ENCODE measurements at regions of chr3 and their contacts with region 1.

Region 1: DNA sequence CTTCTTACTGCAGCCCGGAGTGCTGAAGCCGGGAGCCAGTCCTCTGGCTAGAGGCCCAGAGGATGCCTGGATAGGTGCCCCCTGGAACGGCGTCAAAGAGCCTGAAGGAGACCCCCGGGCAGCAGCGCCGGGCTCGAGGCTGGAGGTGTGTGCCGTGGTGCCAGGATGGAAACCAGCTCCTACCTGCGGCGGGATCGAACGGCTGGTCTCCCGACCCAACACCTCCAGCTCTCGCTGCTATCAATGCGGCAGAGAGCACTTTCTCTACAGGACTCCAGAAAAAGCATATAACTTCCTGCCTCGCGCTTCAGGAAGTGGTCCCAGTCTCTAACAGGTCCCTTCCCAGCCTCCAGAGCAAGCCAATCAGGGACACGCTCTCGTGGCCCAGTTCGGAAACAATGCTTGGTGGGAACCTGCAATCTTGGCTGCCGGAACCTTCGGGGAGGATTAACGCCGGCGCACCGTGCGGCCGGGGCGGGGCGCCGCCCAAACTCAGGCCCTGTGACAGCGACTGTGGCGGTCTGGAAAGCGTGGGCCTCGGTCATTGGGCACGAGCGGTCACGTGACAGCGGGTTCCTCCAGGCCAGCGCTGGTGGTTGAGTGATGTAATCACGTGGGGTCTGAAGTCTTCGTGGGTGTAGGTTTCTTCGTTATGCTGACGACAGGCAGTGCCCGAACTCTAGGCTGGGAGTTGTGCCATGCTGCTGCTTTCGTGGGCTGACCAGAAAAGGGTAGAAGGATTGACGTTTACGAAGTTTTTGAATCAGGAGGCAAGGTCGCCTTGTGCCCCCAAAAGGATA is at the start of gene SLC33A1:
- DNase-seq: peak; percentile 100
- H3K4me3 ChIP-seq: peak within 1 kb of the TSS; percentile 76 to 96 (median 91)
- H3K27ac ChIP-seq: peak within 1 kb of the TSS; percentile 91 to 97 (median 94)
- H3K4me1 ChIP-seq: peaks cover 0 to 52% (median 44%) of the 10 kb centered on the region in 4 donors
- H3K27me3 ChIP-seq: no peaks in the 10 kb centered on the region
- CTCF ChIP-seq: no peak
- EP300 ChIP-seq: peak in 2 of 4 donors; percentile 76 to 90
- POLR2A ChIP-seq: peak; percentile 54 to 55
- total RNA-seq, gene SLC33A1: 14.4 to 28.2 (median 22.6) TPM

Region 2: DNA sequence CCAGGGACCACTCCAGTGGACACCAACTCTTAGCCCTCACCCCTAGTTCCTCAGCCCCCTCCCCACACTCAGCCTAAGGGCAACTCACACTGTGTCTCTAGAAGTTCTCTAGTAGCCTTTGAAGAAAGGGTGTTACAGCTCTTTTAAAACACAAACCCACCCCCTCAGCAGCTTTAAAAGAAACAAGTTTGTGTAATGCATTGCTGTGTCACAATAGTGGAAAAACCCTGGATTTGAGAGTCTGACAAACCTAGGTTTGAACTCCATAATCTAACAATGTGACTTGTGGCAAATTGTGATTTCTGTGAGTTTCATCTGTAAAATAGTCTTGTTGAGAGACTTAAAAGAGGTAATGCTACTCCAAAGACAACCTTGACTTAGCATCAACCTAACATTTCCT is 163.4 kb before region 1 on chr3:
- intact Hi-C with region 1: no loop called
- DNase-seq: no peak
- H3K4me3 ChIP-seq: no peak overlapping the region
- H3K27ac ChIP-seq: no peak overlapping the region
- H3K4me1 ChIP-seq: no peaks in the 10 kb centered on the region
- H3K27me3 ChIP-seq: no peaks in the 10 kb centered on the region
- CTCF ChIP-seq: no peak
- EP300 ChIP-seq: no peak
- POLR2A ChIP-seq: no peak

Region 3: DNA sequence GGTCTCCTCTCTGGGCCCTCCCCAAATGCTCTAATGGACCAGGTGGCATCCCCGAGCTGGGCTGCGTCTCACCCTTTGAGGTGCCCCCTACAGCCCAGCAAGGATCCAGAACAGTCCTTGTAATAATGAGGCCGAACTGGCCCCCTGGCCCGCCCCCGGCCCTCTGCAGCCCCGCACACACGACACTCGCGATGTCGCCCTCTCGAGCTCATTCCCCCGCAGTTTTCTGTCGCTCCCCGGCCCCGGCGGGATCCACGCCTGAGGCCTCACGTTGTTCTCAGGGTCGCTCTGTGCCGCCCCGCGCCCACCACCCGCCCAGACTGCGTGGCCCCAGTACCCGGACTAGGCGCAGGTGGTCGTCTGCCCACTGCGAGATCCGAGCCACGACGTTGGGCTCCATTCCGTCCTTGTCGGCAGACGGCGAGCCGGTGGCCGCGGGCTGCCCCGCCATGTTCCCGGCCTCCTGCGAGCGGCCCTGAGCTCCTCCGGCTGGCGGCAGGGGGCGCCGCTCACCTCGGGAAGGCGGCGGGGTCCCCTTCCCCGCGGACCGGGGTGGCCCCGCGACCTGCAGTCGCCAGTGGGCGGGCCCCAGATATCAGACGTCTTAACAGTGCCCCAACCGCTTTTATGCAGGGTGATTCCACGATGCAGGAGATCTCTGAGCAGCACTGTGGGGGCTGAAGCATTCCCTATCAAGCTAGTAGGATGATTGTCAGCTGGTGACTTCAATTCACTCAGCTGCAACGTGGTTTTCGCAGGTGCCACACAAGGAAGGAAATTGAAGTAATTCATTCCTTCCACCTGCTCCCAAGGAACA is 48.3 kb before region 1 on chr3 and contains the start of gene C3orf33:
- intact Hi-C with region 1: loop called (anchors 5 kb)
- DNase-seq: peak; percentile 77
- H3K4me3 ChIP-seq: peak within 1 kb of the TSS; percentile 79 to 87 (median 87)
- H3K27ac ChIP-seq: peak within 1 kb of the TSS; percentile 86 to 89 (median 86)
- H3K4me1 ChIP-seq: peaks cover 0 to 21% (median 10%) of the 10 kb centered on the region in 4 donors
- H3K27me3 ChIP-seq: no peaks in the 10 kb centered on the region
- CTCF ChIP-seq: peak; percentile 51 to 91 (median 64)
- EP300 ChIP-seq: no peak
- POLR2A ChIP-seq: no peak
- total RNA-seq, gene C3orf33: 3.6 to 8.6 (median 5.1) TPM

Region 4: DNA sequence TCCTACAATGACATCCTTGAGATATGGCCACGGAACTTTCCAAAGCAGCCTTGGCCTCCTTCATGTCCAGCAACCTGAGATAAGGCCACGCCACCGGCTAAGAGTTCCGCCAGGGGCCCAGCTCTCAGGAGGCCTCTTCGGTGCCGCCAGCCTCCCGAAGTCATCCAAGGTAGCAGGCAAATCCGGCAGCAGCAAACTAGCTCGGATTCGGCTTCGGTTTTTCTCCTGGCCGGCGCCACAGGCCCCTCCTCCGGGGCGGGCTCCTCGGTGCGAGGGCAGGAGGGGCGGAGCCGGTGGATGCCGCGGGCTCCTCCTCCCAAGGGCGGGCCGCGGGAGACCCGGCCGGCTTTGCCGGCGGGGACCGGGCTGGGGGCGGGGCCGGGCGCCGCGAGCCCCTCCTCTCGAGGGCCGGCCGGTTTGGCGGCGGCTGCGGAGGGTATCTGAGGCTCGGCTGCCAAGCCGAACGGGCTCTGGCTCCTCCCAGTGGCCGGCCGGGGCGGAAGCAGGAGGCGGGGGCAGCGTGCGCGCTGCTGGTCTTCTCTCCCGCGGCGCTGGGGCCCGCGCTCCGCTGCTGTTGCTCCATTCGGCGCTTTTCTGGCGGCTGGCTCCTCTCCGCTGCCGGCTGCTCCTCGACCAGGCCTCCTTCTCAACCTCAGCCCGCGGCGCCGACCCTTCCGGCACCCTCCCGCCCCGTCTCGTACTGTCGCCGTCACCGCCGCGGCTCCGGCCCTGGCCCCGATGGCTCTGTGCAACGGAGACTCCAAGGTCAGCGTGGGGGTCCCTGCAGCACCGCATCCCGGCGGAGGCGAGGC is 16.0 kb after region 1 on chr3 and contains the start of gene GMPS:
- intact Hi-C with region 1: loop called (anchors 1 kb)
- DNase-seq: peak; percentile 97
- H3K4me3 ChIP-seq: peak within 1 kb of the TSS; percentile 84 to 99 (median 92)
- H3K27ac ChIP-seq: peak within 1 kb of the TSS; percentile 94 to 100 (median 98)
- H3K4me1 ChIP-seq: peaks cover 0 to 34% (median 25%) of the 10 kb centered on the region in 4 donors
- H3K27me3 ChIP-seq: no peaks in the 10 kb centered on the region
- CTCF ChIP-seq: peak in 1 of 4 experiments; percentile 43
- EP300 ChIP-seq: no peak
- POLR2A ChIP-seq: peak; percentile 35 to 58
- total RNA-seq, gene GMPS: 22.8 to 45.7 (median 29.0) TPM

Region 5: DNA sequence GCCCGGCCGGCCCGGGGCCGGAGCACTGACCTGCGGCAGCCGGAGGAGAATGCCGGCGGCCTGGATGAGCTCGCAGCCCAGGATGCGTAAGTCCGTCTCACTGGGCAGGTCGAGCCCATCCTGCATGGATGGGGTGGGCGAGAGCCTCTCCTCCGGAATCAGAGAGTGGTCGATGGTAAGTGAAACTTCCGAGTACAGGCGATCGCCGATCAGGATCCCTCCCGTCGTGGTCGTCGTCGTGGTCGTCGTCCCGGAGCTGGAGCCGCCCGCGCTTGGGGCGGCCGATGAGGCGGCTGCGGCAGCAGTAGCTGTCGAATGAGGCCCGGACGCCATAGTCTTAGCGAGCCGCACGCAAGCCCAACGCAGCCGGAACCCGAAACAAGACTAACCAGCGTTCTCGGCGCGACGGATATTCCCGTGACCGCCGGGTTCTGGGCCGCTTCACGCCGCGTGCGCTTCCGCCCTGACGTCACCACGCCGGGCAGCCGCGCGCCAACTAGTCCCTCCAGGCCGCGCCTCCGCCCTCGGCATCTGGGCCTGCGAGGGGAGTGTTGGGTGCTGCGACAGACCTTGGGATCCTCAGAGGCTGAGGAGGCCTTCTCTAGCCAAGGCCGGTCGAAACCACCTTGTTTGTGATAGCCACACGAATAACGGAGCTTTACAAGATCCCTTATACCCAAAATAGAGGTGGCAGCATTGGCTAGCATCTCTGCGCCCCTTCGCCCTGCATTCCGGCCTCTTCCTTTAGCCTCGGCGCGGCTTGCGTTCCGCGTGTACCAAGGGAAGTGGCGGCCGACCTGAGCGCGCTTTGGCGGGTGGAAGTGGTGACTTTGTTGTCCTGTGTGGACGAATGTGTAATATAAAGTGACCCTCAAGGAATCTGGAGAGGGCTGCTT is 1305.7 kb after region 1 on chr3 and contains the start of gene CCNL1:
- intact Hi-C with region 1: loop called (anchors 10 kb)
- DNase-seq: peak; percentile 99
- H3K4me3 ChIP-seq: peak within 1 kb of the TSS; percentile 78 to 99 (median 88)
- H3K27ac ChIP-seq: peak within 1 kb of the TSS; percentile 96 to 100 (median 100)
- H3K4me1 ChIP-seq: peaks cover 4 to 50% (median 48%) of the 10 kb centered on the region in 4 donors
- H3K27me3 ChIP-seq: no peaks in the 10 kb centered on the region
- CTCF ChIP-seq: no peak
- EP300 ChIP-seq: peak in 3 of 4 donors; percentile 46 to 97 (median 90)
- POLR2A ChIP-seq: peak; percentile 99
- total RNA-seq, gene CCNL1: 110 to 403 (median 215) TPM